ENCODE measurements at regions of chr2 and their contacts with region 1.

Region 1: GRCh38 chr2:189407281-189408209 is 33.7 kb upstream of the WDR75 start:
- DNase-seq: peak in 1 of 2 donors; percentile 69
- H3K4me3 ChIP-seq: no peak overlapping the region
- H3K27ac ChIP-seq: peak overlapping the region in 4 of 5 donors; percentile 35 to 68 (median 60)
- H3K4me1 ChIP-seq: peaks cover 0 to 21% (median 12%) of the 10 kb centered on the region in 4 donors
- H3K27me3 ChIP-seq: no peaks in the 10 kb centered on the region
- CTCF ChIP-seq: no peak
- EP300 ChIP-seq: no peak
- POLR2A ChIP-seq: no peak

Region 2: DNA sequence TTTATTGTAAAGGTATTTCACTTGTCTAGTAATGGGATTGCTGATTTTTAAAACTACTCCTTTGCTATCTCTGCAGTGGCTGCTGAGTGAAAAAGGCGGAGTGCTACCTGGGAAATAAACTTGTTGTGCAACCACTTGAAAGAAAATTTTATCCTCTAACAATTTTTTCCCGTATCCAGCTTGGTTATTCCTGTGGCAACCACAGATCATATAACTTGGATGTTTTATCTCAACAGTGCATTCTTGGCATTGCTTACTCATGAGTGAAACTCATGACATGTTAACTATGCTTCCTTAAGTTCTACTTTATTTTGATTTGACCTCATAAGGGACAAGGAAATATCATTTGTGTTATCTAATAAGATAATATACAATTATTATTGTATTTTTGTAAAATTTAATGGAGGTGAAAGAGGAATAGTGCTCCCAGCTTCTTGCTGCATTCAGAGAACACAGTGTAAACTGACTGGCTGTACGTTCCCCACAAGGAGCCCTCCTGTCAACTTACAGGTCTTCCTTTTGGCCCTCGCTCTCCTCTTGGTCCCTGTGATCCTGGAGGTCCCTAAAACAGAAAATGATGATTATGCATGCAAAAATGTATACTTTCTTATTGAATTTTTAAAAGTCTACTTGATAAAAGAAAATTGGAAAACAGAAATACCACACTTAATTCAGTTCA is 310.6 kb before region 1 on chr2:
- intact Hi-C with region 1: loop called (anchors 10 kb)
- DNase-seq: no peak
- H3K4me3 ChIP-seq: no peak overlapping the region
- H3K27ac ChIP-seq: peak overlapping the region in 1 of 5 donors; percentile 12
- H3K4me1 ChIP-seq: peaks cover 0 to 41% (median 17%) of the 10 kb centered on the region in 4 donors
- H3K27me3 ChIP-seq: no peaks in the 10 kb centered on the region
- CTCF ChIP-seq: no peak
- EP300 ChIP-seq: no peak
- POLR2A ChIP-seq: no peak

Region 3: DNA sequence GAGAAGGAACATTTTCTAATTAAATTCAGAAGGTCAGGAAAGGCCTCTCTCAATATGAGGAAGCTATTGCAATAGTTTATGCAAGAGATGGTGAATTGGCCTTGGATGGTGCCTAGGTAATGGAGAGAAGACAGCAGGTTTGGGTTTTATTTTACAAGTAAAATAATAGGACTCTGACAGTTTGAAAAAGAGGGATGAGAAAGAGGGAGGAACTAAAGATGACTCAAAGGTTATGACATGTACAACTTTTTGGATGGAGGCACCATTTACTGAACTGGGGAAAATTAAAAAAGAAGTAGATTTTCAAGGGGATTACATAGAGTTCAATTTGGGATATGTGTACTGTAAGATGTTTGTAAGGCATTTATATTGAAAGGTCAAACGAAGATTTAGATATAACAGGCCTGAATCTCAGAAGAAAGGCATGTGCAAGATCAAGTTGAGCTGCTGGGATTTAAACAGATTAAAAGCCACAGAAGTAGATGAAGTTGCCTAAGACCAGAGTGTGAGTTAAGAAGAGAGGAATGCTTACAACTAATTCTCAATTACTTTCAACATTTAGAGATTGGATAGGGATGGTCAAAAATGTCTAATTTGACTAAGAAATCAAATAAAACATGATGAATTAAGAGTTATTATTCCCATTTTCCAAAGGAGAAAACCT is 241.4 kb after region 1 on chr2:
- intact Hi-C with region 1: no loop called
- DNase-seq: no peak
- H3K4me3 ChIP-seq: no peak overlapping the region
- H3K27ac ChIP-seq: no peak overlapping the region
- H3K4me1 ChIP-seq: no peaks in the 10 kb centered on the region
- H3K27me3 ChIP-seq: no peaks in the 10 kb centered on the region
- CTCF ChIP-seq: no peak
- EP300 ChIP-seq: no peak
- POLR2A ChIP-seq: no peak

Measured in stomach (tissue), 19 donors.